Right ventricle myocardium inferior (tissue), 1 donor: ENCODE measurements at regions of chr12 and their contacts with region 1.

Region 1: GRCh38 chr12:107093417-107094182 is at the start of gene CRY1:
- DNase-seq: peak; percentile 98
- ATAC-seq: peak; percentile 98
- total RNA-seq, gene CRY1: 7.4 TPM

Region 2: GRCh38 chr12:106955377-106956047 is 138.1 kb before region 1 on chr12 and contains the start of gene TMEM263:
- intact Hi-C with region 1: loop called (anchors 10 kb)
- DNase-seq: peak; percentile 94
- ATAC-seq: peak; percentile 96
- total RNA-seq, gene TMEM263: 35.8 TPM

Region 3: GRCh38 chr12:106986625-106987430 is 106.8 kb before region 1 on chr12 and contains the start of gene MTERF2:
- intact Hi-C with region 1: loop called (anchors 1 kb)
- DNase-seq: peak; percentile 95
- ATAC-seq: peak; percentile 99
- total RNA-seq, gene MTERF2: 33.1 TPM

Region 4: DNA sequence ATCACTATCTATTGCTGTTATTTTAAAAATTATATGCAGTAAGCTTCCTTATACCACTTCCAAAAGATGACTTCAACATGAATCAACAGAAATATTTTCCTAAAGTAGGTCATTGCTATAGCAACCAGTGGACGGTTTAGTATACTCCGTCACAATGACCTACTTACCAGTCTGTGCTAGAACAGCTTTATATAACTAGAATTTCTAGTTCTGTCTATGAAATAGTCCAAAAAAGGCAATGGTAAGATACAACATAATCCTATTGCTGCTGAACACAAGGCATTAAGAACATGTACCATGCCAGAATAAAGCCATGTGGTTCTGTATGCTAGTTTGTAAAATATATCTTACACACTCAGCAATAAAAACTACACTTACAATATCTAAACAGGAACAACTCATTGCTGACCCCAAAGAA is 66.0 kb before region 1 on chr12:
- intact Hi-C with region 1: loop called (anchors 5 kb)
- DNase-seq: no peak
- ATAC-seq: peak; percentile 95

Region 5: DNA sequence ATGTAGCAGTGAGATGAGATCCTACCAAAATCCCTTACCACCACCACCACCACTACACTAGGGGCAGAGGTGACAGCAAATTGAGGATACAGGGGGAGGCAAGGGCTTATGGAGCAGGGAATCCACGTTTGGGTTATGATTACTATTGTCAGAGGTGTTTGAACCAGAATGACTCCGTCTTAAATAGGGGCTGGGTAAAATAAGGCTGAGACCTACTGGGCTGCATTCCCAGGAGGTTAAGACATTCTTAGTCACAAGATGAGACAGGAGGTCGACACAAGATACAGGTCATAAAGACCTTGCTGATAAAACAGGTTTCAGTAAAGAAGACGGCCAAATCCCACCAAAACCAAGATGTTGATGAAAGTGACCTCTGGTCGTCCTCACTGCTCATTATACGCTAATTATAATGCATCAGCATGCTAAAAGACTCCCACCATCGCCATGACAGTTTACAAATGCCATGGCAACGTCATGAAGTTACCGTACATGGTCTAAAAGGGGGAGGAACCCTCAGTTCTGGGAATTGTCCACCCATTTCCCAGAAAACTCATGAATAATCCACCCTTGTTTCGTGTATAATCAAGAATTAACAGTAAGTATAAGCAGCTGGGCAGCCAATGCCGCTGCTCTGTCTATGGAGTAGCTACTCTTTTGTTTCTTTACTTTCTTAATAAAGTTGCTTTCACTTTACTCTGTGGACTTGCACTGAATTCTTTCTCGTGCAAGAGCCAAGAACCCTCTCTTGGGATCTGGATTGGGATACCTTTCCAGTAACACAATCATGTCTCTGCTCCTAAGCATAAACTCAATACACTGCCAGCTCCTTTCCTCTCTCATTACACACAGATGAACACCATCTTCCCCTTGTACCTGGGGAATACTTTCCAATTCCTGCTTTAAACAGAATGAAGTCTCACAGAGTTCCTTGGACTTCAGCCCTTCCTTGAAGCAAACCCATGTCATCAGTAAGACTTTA is 16.4 kb after region 1 on chr12:
- intact Hi-C with region 1: no loop called
- DNase-seq: no peak
- ATAC-seq: peak; percentile 59